Activated T-helper 1 cell treated with anti-CD3 and anti-CD28 coated beads, Interleukin-12 subunit alpha, Interleukin-12 subunit beta, Interleukin-2, Interleukin-4 antibody, amounts not matched to agents 30 ng/mL and 10 ng/mL and 1 ng/mL, durations not matched to agents 14 hours and 24 hours and 36 hours (primary cell): ENCODE measurements at regions of chr19 and their contacts with region 1.

Region 1: DNA sequence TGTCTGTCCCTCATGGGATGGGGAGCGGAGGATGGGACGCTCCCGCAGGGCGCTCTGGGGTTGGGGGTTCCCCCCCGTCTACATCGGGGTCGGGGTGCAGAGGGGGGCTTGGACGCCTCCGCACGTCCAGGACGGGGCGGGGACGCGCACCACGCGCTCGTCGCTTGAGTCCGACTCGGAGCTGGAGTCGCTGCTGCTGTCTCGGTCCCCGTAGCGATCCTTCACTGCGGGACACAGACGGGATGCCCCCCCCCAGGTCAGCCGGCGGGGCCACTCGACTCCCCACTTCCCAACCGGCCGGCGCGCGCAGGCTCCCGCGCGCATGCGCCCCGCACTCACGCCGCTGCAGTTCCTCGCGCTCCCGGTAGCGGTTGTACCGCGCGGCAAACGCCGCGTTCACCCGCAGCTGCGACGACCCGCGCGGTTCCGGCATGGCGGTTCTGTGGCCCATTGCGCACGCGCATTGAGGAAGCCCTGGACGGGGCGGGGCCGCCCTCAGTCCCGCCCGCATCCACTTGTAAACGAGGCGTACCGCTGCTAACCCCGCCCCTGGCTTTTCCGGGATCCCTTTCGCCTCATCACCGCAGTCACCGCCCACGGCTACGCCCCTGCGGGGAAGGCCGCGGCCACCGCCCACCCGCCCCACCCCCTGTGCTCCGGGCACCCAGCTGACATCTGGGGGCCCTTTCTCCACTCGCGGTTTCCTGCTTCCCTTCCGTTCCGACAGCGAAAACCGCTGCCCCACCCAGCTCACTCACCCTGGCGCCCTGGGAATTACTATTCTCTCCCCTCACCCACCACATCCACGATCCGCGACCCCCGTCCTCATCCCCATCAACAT is at the start of gene KRI1:
- DNase-seq: peak; percentile 100
- H3K4me3 Mint-ChIP-seq: peak within 1 kb of the TSS; percentile 95
- H3K27ac Mint-ChIP-seq: peak within 1 kb of the TSS; percentile 96
- H3K4me1 Mint-ChIP-seq: peaks cover 48% of the 10 kb centered on the region
- H3K27me3 Mint-ChIP-seq: no peaks in the 10 kb centered on the region
- total RNA-seq, gene KRI1: 91.1 and 91.8 TPM in 2 replicates

Region 2: GRCh38 chr19:10332955-10333757 is 232.6 kb before region 1 on chr19 and contains the start of gene RAVER1:
- intact Hi-C with region 1: loop called (anchors 1 kb)
- DNase-seq: peak; percentile 95
- H3K4me3 Mint-ChIP-seq: peak within 1 kb of the TSS; percentile 90
- H3K27ac Mint-ChIP-seq: peak within 1 kb of the TSS; percentile 95
- H3K4me1 Mint-ChIP-seq: peaks cover 11% of the 10 kb centered on the region
- H3K27me3 Mint-ChIP-seq: no peaks in the 10 kb centered on the region
- total RNA-seq, gene RAVER1: 92.5 and 92.8 TPM in 2 replicates

Region 3: GRCh38 chr19:10379880-10380312 is 185.9 kb before region 1 on chr19:
- intact Hi-C with region 1: no loop called
- DNase-seq: no peak
- H3K4me3 Mint-ChIP-seq: peak overlapping the region; percentile 95
- H3K27ac Mint-ChIP-seq: peak overlapping the region; percentile 97
- H3K4me1 Mint-ChIP-seq: peaks cover 27% of the 10 kb centered on the region
- H3K27me3 Mint-ChIP-seq: peaks cover 3% of the 10 kb centered on the region

Region 4: DNA sequence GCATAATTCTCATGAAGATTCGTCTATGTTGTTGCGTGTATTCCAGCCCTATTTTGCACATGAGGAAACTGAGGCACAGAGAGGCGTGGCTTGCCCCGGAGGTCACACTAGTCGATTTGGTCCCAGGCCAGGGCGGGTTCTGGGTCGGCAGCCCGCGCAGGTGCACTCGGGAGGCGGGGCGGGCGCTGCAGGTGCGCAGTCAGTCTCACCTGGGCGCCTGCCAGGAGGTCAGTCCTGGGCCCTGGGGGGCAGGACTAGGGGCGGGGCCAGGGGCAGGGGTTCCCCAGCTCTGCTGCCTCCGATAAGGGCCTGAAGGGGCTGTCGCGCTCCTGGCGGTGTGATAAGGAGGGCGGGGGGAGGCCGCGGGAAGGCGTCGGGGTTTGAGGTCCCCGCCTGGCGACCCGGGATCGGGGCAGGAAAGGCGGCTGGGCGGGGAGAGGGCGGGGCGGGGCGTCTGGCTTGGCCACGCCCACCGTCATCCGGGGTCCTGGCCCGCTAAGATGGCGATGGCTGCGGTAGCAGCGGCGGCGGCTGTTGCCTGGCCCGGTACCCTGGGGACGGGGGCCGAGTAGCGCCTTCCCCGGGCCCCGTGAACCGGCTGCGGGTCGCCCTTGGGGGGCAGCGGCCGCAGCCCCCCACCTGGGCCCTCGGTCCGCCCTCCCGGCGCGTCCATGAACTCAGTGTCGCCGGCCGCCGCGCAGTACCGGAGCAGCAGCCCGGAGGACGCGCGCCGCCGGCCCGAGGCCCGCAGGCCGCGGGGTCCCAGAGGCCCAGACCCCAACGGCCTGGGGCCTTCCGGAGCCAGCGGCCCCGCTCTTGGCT is 22.2 kb before region 1 on chr19 and contains the start of gene ATG4D:
- intact Hi-C with region 1: loop called (anchors 1 kb)
- DNase-seq: peak; percentile 71
- H3K4me3 Mint-ChIP-seq: peak within 1 kb of the TSS; percentile 85
- H3K27ac Mint-ChIP-seq: peak within 1 kb of the TSS; percentile 82
- H3K4me1 Mint-ChIP-seq: peaks cover 7% of the 10 kb centered on the region
- H3K27me3 Mint-ChIP-seq: peaks cover 25% of the 10 kb centered on the region
- total RNA-seq, gene ATG4D: 37.3 and 40.7 TPM in 2 replicates

Region 5: GRCh38 chr19:10644260-10645007 is 78.6 kb after region 1 on chr19:
- intact Hi-C with region 1: no loop called
- DNase-seq: peak; percentile 63
- H3K4me3 Mint-ChIP-seq: no peak overlapping the region
- H3K27ac Mint-ChIP-seq: peak overlapping the region; percentile 12
- H3K4me1 Mint-ChIP-seq: peaks cover 22% of the 10 kb centered on the region
- H3K27me3 Mint-ChIP-seq: no peaks in the 10 kb centered on the region

Region 6: GRCh38 chr19:10695401-10696398 is 129.9 kb after region 1 on chr19:
- intact Hi-C with region 1: loop called (anchors 1 kb)
- DNase-seq: peak; percentile 91
- H3K4me3 Mint-ChIP-seq: peak overlapping the region; percentile 55
- H3K27ac Mint-ChIP-seq: no peak overlapping the region
- H3K4me1 Mint-ChIP-seq: peaks cover 26% of the 10 kb centered on the region
- H3K27me3 Mint-ChIP-seq: peaks cover 6% of the 10 kb centered on the region

Region 7: DNA sequence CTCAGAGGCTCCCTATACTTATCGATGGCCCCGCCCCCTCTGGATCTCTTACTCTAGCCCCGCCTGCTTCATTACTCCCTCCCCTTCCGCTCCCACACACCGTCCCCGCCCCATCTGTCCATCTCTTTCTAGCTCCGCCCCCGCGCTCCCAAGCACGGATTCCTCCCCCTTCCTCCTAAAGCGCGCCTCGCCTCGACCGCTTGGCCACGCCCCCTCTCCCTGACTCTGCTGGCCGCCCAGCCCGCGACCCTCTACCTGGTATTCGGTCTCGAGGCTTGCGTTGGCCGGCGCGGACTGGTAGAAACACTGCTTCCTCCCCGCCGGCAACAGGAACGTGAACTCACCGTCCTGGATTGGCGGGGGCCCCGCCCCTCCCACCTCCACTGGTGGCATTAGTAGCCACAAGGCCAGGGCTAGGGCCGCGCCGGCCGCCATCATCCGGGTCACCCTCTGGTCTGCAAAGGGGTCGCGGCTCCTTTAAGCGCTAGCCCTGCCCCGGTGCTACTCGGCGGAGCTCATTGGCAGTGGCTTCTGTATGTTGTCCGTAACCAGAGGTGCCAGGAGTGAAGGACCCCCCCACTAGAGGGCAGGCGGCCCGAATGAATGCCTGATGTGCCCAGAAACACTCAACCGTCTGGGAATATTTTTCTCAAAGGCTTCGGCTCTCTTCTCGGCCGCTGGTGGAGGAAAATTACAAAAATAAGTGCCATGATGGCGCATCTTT is 270.1 kb after region 1 on chr19 and contains the start of gene TMED1:
- intact Hi-C with region 1: loop called (anchors 1 kb)
- DNase-seq: peak; percentile 93
- H3K4me3 Mint-ChIP-seq: peak within 1 kb of the TSS; percentile 92
- H3K27ac Mint-ChIP-seq: peak within 1 kb of the TSS; percentile 99
- H3K4me1 Mint-ChIP-seq: peaks cover 15% of the 10 kb centered on the region
- H3K27me3 Mint-ChIP-seq: peaks cover 4% of the 10 kb centered on the region
- total RNA-seq, gene TMED1: 19.8 and 21.0 TPM in 2 replicates